GM10248 (cell line): ENCODE measurements at regions of chr2 and their contacts with region 1.

Region 1: DNA sequence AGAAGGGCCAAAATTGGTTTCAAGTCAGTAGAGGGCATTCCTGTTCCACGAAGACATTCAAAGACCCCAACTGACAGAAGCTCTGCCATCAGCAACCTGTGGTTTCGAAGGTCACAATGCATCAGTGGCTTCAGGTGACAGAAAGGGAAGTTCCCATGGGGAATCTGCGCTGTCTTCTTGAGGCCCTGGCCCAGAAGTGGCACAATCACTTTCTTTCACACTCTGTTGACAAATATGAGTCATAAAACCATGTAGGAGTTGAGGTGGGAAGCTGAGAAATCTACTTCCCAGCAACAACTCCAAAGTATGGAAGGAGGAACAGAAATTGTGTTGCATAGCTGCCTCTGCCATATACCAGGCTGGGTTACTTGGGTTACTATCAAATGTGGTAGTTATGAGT is 621.1 kb upstream of the FANCL start:
- DNase-seq: no peak
- CTCF ChIP-seq: no peak

Region 2: DNA sequence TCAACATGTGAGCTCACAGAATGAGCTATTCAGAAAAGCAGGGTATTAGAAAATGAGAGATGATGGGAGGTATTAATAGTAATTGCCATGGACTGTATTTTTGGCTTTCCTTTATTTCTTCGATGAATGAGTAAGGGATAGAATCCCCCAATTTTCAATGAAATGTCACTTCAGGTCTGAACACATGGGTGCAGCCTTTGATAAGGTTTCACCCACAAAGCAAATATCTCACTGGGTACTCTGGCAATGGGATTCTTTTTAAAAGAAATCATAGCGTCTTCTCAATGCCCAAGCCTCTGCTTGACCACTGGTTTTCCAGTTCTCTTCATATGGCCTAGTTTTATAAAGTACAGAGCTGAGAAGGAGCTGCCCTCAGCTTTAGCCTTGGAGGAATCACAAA is 10.6 kb before region 1 on chr2:
- CTCF ChIA-PET with region 1: interaction called, 11 read pairs
- POLR2A ChIA-PET with region 1: no interaction called
- DNase-seq: no peak
- CTCF ChIP-seq: no peak